ENCODE measurements at regions of chr2 and their contacts with region 1.

Region 1: DNA sequence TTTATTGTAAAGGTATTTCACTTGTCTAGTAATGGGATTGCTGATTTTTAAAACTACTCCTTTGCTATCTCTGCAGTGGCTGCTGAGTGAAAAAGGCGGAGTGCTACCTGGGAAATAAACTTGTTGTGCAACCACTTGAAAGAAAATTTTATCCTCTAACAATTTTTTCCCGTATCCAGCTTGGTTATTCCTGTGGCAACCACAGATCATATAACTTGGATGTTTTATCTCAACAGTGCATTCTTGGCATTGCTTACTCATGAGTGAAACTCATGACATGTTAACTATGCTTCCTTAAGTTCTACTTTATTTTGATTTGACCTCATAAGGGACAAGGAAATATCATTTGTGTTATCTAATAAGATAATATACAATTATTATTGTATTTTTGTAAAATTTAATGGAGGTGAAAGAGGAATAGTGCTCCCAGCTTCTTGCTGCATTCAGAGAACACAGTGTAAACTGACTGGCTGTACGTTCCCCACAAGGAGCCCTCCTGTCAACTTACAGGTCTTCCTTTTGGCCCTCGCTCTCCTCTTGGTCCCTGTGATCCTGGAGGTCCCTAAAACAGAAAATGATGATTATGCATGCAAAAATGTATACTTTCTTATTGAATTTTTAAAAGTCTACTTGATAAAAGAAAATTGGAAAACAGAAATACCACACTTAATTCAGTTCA is 82.7 kb downstream of the COL5A2 start:
- DNase-seq: no peak
- H3K4me3 ChIP-seq: no peak overlapping the region
- H3K27ac ChIP-seq: no peak overlapping the region
- H3K4me1 ChIP-seq: peaks cover 0 to 7% (median 5%) of the 10 kb centered on the region in 3 donors
- H3K27me3 ChIP-seq: no peaks in the 10 kb centered on the region
- CTCF ChIP-seq: no peak
- POLR2A ChIP-seq: no peak

Region 2: GRCh38 chr2:189412330-189412953 is 315.5 kb after region 1 on chr2:
- intact Hi-C with region 1: loop called (anchors 10 kb)
- DNase-seq: no peak
- H3K4me3 ChIP-seq: no peak overlapping the region
- H3K27ac ChIP-seq: peak overlapping the region in 3 of 4 donors; percentile 55 to 71 (median 68)
- H3K4me1 ChIP-seq: peaks cover 0 to 6% (median 3%) of the 10 kb centered on the region in 3 donors
- H3K27me3 ChIP-seq: no peaks in the 10 kb centered on the region
- CTCF ChIP-seq: peak; percentile 32 to 79 (median 66)
- POLR2A ChIP-seq: no peak